HepG2 (cell line): ENCODE measurements at regions of chr10 and their contacts with region 1.

Region 1: GRCh38 chr10:52313933-52314816 is at the start of gene DKK1:
- DNase-seq: peak; percentile 91
- ATAC-seq: peak; percentile 94
- H3K4me3 ChIP-seq: peak within 1 kb of the TSS; percentile 59 to 77 (median 68)
- H3K27ac ChIP-seq: peak within 1 kb of the TSS; percentile 61
- H3K4me1 ChIP-seq: peaks cover 49% of the 10 kb centered on the region
- H3K27me3 ChIP-seq: peaks cover 0 to 13% of the 10 kb centered on the region in 2 experiments; a peak in 2 of 5 replicates
- CTCF ChIP-seq: peak; percentile 94
- EP300 ChIP-seq: peak in 1 of 2 experiments; percentile 88; a peak in 2 of 4 replicates
- POLR2A ChIP-seq: peak; percentile 75 to 95
- RAD21 ChIP-seq: peak; percentile 88
- total RNA-seq, gene DKK1: 143 and 262 TPM in 2 replicates

Region 2: DNA sequence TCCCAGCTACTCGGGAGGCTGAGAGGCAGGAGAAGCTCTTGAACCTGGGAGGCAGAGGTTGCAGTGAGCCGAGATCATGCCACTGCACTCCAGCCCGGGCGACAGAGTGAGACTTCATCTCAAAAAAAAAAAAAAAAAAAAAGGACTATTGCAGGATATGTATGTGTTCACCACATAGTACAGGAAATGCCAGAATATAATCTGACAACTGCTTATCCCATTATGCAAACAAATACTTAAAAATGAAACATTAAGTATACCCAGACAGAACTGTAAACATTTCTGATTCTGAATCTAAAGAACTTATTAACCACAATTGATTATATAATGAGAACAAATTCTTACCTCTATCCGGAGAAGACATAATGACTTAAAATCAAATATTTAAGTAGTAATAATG is 18.6 kb after region 1 on chr10:
- CTCF ChIA-PET with region 1: no interaction called
- POLR2A ChIA-PET with region 1: no interaction called
- in situ Hi-C with region 1: no loop called
- intact Hi-C with region 1: loop called (anchors 2 kb)
- DNase-seq: no peak
- ATAC-seq: peak; percentile 47; the same call in 2 of the 3 replicates
- H3K4me3 ChIP-seq: no peak overlapping the region
- H3K27ac ChIP-seq: no peak overlapping the region
- H3K4me1 ChIP-seq: peaks cover 41% of the 10 kb centered on the region
- H3K27me3 ChIP-seq: no peaks in the 10 kb centered on the region
- CTCF ChIP-seq: no peak
- EP300 ChIP-seq: no peak
- POLR2A ChIP-seq: no peak
- RAD21 ChIP-seq: no peak

Region 3: GRCh38 chr10:52376694-52377354 is 62.6 kb after region 1 on chr10:
- CTCF ChIA-PET with region 1: no interaction called
- POLR2A ChIA-PET with region 1: no interaction called
- in situ Hi-C with region 1: no loop called
- intact Hi-C with region 1: loop called (anchors 1 kb)
- DNase-seq: peak; percentile 67
- ATAC-seq: peak; percentile 60
- H3K4me3 ChIP-seq: peak overlapping the region in 2 of 3 experiments; percentile 6 to 11; a peak in 1 of 6 replicates
- H3K27ac ChIP-seq: peak overlapping the region; percentile 60
- H3K4me1 ChIP-seq: peaks cover 55% of the 10 kb centered on the region
- H3K27me3 ChIP-seq: no peaks in the 10 kb centered on the region
- CTCF ChIP-seq: no peak
- EP300 ChIP-seq: peak in 1 of 2 experiments; percentile 81; a peak in 2 of 4 replicates
- POLR2A ChIP-seq: no peak
- RAD21 ChIP-seq: no peak

Region 4: DNA sequence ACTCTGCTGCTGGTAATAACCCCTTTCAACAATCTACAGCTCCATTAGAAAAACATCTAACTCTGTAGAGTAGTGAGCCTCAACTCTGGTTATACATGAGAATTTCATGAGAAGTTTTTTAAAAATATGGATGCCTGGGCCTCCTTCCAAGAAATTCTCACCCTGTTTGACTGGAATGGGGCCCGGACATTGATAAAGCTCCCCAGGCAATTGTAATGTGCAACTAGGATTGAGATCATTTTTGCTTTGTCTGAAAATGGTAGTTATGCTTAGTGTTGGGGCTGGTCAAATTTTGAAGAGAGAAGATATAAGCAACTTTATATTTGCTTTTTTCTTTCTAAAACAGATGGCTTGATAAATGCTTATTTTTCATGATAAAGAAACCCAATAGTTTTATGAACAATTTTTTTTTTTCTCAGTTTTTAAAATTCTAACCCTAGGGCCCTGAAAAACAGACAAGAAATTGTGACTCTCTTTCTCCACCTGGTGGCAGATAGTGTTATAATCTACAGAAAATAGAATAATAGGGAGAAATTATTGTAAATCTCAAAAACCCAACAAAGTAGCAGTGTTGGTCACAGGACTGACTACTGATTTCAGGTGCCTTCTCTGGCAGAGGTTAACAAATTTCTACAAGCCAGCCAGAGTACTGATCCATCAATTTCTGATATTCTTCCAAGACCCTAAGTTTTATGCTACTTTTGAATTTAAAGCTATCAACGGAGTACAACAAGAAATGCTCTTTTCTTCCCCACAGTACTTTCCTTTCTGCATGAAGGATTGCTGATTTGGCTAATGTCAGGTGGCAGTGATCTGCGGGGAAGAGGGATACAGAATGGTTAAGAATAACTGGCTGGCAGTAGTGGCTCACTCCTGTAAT is 174.7 kb after region 1 on chr10:
- CTCF ChIA-PET with region 1: interaction called, 121 read pairs
- POLR2A ChIA-PET with region 1: interaction called, 3 read pairs
- in situ Hi-C with region 1: loop called (anchors 5 kb)
- intact Hi-C with region 1: loop called (anchors 1 kb)
- DNase-seq: peak; percentile 46
- ATAC-seq: peak; percentile 54; the same call in 1 of the 3 replicates
- H3K4me3 ChIP-seq: no peak overlapping the region
- H3K27ac ChIP-seq: no peak overlapping the region
- H3K4me1 ChIP-seq: no peaks in the 10 kb centered on the region
- H3K27me3 ChIP-seq: no peaks in the 10 kb centered on the region; a peak in 1 of 5 replicates
- CTCF ChIP-seq: peak; percentile 59
- EP300 ChIP-seq: no peak
- POLR2A ChIP-seq: no peak
- RAD21 ChIP-seq: peak; percentile 29; the same call in 1 of the 2 replicates

Region 5: GRCh38 chr10:52566471-52567246 is 252.5 kb after region 1 on chr10:
- CTCF ChIA-PET with region 1: interaction called, 29 read pairs
- POLR2A ChIA-PET with region 1: no interaction called
- in situ Hi-C with region 1: loop called (anchors 10 kb)
- intact Hi-C with region 1: no loop called
- DNase-seq: peak; percentile 16
- ATAC-seq: no peak
- H3K4me3 ChIP-seq: no peak overlapping the region
- H3K27ac ChIP-seq: no peak overlapping the region
- H3K4me1 ChIP-seq: no peaks in the 10 kb centered on the region
- H3K27me3 ChIP-seq: no peaks in the 10 kb centered on the region
- CTCF ChIP-seq: peak; percentile 35; the same call in 1 of the 2 replicates
- EP300 ChIP-seq: no peak
- POLR2A ChIP-seq: no peak
- RAD21 ChIP-seq: 0 out of 2 replicates have a peak, but pooled peaks have one; percentile 29

Region 6: GRCh38 chr10:52779541-52780390 is 465.6 kb after region 1 on chr10:
- CTCF ChIA-PET with region 1: no interaction called
- POLR2A ChIA-PET with region 1: no interaction called
- in situ Hi-C with region 1: loop called (anchors 5 kb)
- intact Hi-C with region 1: no loop called
- DNase-seq: peak; percentile 64
- ATAC-seq: peak; percentile 80
- H3K4me3 ChIP-seq: peak overlapping the region in 1 of 3 experiments; percentile 31; a peak in 1 of 6 replicates
- H3K27ac ChIP-seq: no peak overlapping the region
- H3K4me1 ChIP-seq: peaks cover 51% of the 10 kb centered on the region
- H3K27me3 ChIP-seq: no peaks in the 10 kb centered on the region
- CTCF ChIP-seq: peak; percentile 97
- EP300 ChIP-seq: no peak
- POLR2A ChIP-seq: no peak
- RAD21 ChIP-seq: peak; percentile 99